GM18951 (cell line): ENCODE measurements at regions of chr12 and their contacts with region 1.

Region 1: DNA sequence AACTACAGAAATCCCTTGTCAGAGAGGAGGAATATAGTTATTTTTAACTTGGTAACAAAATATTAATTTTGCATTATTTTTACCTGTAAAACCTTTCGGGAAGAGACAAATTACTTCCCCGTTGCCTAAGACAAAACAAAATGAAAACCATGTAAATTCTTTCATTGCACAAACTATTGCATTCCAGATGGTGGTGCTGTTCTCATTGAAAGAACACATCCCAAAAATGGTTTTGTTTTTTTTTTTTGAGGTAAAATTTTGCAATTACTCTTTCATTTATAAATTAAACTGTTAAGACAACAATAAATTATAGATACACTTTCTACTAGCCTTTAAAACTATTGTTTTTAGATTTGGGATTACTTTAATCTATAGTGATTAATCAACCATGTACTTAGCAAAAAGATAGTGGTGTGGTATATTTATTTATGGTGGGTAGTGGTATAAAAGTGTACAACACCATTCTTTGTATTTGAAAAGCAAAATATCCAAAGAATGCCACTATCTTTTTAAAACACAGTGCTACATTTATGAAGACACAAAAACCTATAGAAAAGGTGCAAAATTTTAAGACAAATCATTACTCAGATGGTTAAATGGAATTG is 115.5 kb downstream of the SLC38A1 start:
- POLR2A ChIP-seq: no peak

Region 2: GRCh38 chr12:46268590-46269558 is 115.5 kb after region 1 on chr12 and contains the start of gene SLC38A1:
- in situ Hi-C with region 1: no loop called
- POLR2A ChIP-seq: peak; percentile 77

Region 3: GRCh38 chr12:46303039-46303666 is 149.8 kb after region 1 on chr12:
- in situ Hi-C with region 1: loop called (anchors 10 kb)
- POLR2A ChIP-seq: no peak

Region 4: GRCh38 chr12:46354111-46354798 is 200.9 kb after region 1 on chr12:
- in situ Hi-C with region 1: no loop called
- POLR2A ChIP-seq: no peak